ENCODE measurements at regions of chr6 and their contacts with region 1.

Region 1: DNA sequence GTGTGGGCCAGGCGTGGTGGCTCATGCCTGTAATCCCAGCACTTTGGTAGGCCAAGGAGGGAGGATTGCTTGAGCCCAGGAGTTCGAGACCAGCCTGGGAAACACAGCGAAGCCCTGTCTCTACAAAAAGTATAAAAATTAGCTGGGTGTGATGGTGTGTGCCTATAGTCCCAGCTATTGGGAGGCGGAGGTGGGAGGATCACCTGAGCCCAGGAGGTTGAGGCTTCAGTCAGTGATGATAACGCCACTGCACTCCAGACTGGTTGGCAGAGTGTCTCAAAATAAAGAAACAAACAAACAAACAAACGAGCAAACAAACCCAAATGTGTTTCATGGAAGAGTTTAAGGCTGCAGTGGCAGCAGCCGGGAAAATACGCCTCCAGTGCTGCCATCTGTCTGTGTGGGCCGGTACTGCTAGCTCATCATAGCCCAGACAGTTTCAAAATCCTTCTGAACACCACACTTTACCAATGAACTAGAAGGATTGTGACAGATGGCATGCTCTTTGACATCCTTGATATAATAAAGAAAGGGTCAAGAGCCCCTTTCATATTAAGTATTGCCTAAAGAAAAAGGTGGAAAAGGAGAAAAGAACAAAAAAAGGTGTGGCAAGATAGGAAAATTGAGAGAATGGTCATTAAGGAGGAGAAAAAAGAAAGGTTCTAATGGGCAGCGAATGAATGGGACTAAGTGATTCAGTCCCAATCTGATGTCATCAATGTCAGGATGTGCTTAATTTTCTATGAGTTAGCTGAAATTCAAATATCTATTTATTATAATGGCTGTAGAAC is 298.6 kb downstream of the SYNE1 start:
- DNase-seq: peak; percentile 39 to 77 (median 69)
- H3K4me3 ChIP-seq: no peak overlapping the region
- H3K27ac ChIP-seq: no peak overlapping the region
- H3K4me1 ChIP-seq: peaks cover 1% of the 10 kb centered on the region
- H3K27me3 ChIP-seq: no peaks in the 10 kb centered on the region
- CTCF ChIP-seq: peak; percentile 66 to 89 (median 71)
- EP300 ChIP-seq: no peak
- POLR2A ChIP-seq: no peak

Region 2: DNA sequence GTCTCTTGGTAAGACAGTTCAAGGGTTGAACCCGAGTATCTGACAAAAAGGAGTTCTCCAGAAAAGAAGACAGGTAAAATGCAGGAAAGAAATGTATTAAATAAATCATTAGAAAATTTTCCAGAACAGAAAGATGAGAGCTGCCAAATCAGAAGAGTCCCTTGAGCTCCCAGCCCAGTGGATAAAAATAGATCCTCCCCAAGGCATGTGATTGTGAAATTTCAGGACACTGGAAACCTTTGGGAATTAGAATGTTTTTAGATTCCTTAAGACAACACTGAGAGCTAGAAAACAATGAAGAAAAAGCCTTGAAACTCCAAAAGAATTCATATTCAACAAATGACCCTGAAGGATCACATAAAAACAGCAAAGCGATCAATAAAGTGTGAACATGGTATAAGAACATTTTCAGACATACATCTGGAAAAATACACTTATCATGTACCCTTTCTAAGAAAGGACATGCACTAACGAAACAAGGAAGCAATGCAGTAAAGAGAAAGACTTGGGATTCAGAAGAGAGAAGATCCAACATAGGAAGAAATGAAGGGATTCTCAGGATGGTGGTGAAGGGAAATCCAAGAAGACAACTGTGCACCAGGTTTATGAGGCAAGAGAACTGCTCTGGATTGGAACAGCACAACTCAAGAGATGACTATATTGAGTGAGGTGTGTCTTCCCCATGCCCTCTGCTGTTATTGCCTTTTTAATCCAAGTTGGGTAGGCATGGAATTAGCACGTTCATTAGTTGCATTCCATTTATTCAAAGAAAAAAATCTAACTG is 91.8 kb before region 1 on chr6:
- intact Hi-C with region 1: no loop called
- DNase-seq: no peak
- H3K4me3 ChIP-seq: no peak overlapping the region
- H3K27ac ChIP-seq: peak overlapping the region in 1 of 2 donors; percentile 62
- H3K4me1 ChIP-seq: peaks cover 19% of the 10 kb centered on the region
- H3K27me3 ChIP-seq: no peaks in the 10 kb centered on the region
- CTCF ChIP-seq: no peak
- EP300 ChIP-seq: no peak
- POLR2A ChIP-seq: no peak

Region 3: GRCh38 chr6:152293404-152293803 is 45.1 kb before region 1 on chr6:
- intact Hi-C with region 1: loop called in 1 of 4 experiments (anchors 10 kb)
- DNase-seq: peak in 1 of 5 donors; percentile 56
- H3K4me3 ChIP-seq: no peak overlapping the region
- H3K27ac ChIP-seq: no peak overlapping the region
- H3K4me1 ChIP-seq: peaks cover 4% of the 10 kb centered on the region
- H3K27me3 ChIP-seq: no peaks in the 10 kb centered on the region
- CTCF ChIP-seq: no peak
- EP300 ChIP-seq: no peak
- POLR2A ChIP-seq: no peak

Region 4: DNA sequence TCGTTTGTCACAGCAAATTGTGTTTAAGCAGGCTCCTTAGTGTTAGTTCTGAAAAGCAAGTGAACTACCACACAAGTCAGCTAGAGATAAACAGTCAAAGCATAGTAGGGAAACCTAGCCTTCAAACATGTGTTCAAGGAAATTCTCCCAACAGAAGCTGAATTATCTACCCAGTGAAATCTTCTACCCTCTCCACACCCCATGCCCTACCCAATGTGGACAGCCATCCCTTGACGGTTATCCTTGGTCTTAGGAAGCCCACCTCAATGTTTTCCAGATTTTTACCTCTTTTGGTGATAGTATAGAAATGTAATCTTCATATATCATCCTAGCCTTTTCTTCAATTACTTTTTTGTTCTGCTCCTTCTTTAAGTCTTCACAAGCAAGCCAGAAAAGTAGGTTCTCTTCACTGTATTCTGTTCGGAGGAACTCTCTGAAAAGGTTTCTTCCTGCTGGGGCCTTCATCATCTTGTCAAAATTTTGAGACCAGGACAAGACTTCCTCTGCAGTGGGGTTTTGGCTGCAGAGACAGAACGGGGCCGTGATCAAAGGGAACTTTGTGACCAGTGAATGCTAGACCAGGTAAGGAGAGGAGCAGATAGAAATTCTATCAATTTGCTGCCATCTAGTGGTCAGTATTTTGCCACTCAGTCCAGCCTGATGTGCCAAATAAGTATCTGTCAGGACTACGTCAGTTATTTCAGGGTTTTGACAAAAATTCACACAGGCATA is 685.6 kb after region 1 on chr6:
- intact Hi-C with region 1: no loop called
- DNase-seq: peak in 2 of 5 donors; percentile 14 to 34
- H3K4me3 ChIP-seq: no peak overlapping the region
- H3K27ac ChIP-seq: no peak overlapping the region
- H3K4me1 ChIP-seq: no peaks in the 10 kb centered on the region
- H3K27me3 ChIP-seq: no peaks in the 10 kb centered on the region
- CTCF ChIP-seq: peak; percentile 47 to 56 (median 48)
- EP300 ChIP-seq: no peak
- POLR2A ChIP-seq: no peak